ENCODE measurements at regions of chr7 and their contacts with region 1.

Region 1: GRCh38 chr7:135211179-135211945 is at the start of gene WDR91:
- H3K4me3 Mint-ChIP-seq: peak within 1 kb of the TSS; percentile 91
- H3K27ac Mint-ChIP-seq: peak within 1 kb of the TSS; percentile 90
- H3K4me1 Mint-ChIP-seq: peaks cover 43% of the 10 kb centered on the region
- H3K27me3 Mint-ChIP-seq: peaks cover 19% of the 10 kb centered on the region

Region 2: DNA sequence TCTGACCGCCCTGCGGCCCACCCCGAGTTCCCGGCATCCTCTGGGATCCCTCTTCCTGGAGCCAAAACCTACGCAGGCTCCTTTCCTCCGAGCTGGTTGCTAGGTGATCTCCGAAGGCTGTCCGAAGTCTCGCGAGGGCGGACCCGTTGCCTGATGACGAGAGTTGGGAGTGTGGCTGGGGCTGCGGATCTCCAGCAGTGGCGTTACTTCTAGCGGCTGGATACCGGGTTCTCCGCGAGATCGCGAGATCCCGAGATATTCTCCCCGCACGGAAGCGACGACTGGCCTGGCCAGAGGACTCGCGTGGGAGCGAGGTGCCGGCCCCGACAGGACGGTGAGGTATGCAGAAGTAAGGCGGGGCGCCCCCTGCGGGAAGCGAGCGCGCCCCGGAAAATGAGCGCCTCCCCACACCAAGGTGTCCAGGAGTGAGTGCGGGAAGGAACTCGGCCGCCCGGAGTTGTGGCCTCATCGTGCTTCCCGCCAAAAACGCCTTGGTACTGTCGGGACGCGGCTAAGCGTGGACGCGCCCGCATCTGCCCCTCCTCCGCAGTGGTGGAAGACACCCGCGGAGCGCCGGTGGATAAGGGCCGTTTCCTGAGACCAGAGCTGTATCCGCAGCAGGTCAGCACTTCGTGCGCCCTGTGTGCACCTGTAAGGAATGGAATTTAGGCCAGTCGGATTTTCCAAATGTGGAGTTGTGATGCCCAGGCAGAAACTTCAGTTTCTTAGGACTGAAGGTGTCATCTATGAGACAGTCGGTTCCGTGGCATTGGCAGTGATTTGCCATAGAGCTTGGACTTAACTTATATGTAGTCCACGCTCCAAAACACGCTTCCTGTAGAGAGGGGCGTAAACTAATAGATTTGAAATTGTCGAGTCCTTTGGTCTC is 224.8 kb before region 1 on chr7 and contains the start of gene AGBL3:
- intact Hi-C with region 1: loop called (anchors 1 kb)
- H3K4me3 Mint-ChIP-seq: peak within 1 kb of the TSS; percentile 98
- H3K27ac Mint-ChIP-seq: peak within 1 kb of the TSS; percentile 95
- H3K4me1 Mint-ChIP-seq: peaks cover 12% of the 10 kb centered on the region
- H3K27me3 Mint-ChIP-seq: no peaks in the 10 kb centered on the region

Region 3: DNA sequence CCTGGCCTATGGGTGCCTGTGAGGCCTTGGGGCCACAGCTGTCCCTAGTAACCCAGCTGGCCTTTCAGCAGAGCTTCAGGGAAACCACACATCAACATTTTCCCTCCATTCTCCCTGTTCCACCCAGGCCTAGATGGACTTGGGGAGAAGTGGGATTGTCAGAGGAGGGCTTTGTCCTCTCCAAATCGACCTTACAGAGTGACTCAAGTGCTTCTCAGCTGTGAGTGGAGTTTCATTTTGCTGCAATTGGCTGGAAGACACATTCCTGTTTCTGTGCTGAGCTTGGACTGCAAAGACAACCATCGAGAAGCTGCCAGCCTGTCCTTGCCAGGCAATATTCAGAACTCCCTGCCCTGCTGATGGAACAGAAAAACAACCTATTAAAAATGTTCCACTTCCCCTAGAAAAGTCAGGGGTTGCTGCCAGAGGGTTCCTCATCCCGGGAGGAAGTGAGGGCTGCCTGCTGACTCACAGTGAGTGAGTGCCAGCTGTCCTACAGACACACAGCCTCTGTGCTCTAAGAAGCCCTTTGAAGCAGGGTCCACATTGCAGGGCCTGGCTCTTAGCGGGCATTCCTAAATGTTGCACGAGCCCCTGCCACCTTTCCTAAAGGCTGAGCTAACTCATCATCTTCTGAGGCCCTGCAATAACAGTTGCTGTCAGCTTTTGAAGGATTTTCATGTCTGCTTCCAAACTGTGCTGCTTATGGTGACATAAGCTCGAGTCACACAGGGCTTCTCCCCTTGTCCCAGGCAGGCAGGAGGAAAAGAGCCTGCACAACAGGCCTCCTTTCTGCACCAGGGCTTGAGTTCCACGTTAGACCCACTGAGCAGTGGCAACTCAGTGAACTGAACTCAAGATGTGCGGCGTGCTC is 42.8 kb after region 1 on chr7:
- intact Hi-C with region 1: loop called (anchors 1 kb)
- H3K4me3 Mint-ChIP-seq: no peak overlapping the region
- H3K27ac Mint-ChIP-seq: peak overlapping the region; percentile 81
- H3K4me1 Mint-ChIP-seq: peaks cover 43% of the 10 kb centered on the region
- H3K27me3 Mint-ChIP-seq: peaks cover 19% of the 10 kb centered on the region